Activated B cell treated with CpG ODN at 0.5 μM for 24 hours (primary cell): ENCODE measurements at regions of chr10 and their contacts with region 1.

Region 1: GRCh38 chr10:80205478-80206276 is at the start of gene ANXA11:
- DNase-seq: peak; percentile 80
- ATAC-seq: peak; percentile 84
- H3K4me3 Mint-ChIP-seq: peak within 1 kb of the TSS; percentile 83
- H3K27ac Mint-ChIP-seq: peak within 1 kb of the TSS; percentile 92
- H3K4me1 Mint-ChIP-seq: peaks cover 51% of the 10 kb centered on the region
- H3K27me3 Mint-ChIP-seq: no peaks in the 10 kb centered on the region
- CTCF ChIP-seq: no peak
- total RNA-seq, gene ANXA11: 178 and 190 TPM in 2 replicates

Region 2: DNA sequence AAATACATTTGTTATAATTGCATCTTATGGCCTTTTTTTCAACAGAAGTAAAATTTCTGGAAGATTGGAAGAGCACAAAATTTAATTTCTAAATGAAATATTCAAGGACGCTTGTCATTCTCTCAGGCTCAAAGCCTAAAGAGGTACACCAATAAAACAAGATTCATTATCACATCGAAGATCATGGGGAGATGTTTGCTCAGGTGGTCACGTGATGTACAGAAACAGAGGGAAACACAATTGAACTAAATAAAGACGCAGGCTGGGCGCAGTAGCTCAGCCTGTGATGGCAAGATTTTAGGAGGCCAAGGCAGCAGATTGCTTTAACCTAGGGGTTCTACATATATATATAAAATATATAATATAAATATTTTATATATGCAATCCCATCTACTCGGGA is 164.5 kb before region 1 on chr10:
- CTCF ChIA-PET with region 1: no interaction called
- POLR2A ChIA-PET with region 1: no interaction called
- intact Hi-C with region 1: no loop called
- DNase-seq: no peak
- ATAC-seq: no peak
- H3K4me3 Mint-ChIP-seq: no peak overlapping the region
- H3K27ac Mint-ChIP-seq: no peak overlapping the region
- H3K4me1 Mint-ChIP-seq: peaks cover 4% of the 10 kb centered on the region
- H3K27me3 Mint-ChIP-seq: peaks cover 1% of the 10 kb centered on the region
- CTCF ChIP-seq: no peak

Region 3: GRCh38 chr10:80168679-80169380 is 36.8 kb before region 1 on chr10:
- CTCF ChIA-PET with region 1: interaction called, 3 read pairs
- POLR2A ChIA-PET with region 1: interaction called, 3 read pairs
- intact Hi-C with region 1: loop called (anchors 2 kb)
- DNase-seq: no peak
- ATAC-seq: peak; percentile 34
- H3K4me3 Mint-ChIP-seq: no peak overlapping the region
- H3K27ac Mint-ChIP-seq: no peak overlapping the region
- H3K4me1 Mint-ChIP-seq: peaks cover 9% of the 10 kb centered on the region
- H3K27me3 Mint-ChIP-seq: no peaks in the 10 kb centered on the region
- CTCF ChIP-seq: no peak

Region 4: DNA sequence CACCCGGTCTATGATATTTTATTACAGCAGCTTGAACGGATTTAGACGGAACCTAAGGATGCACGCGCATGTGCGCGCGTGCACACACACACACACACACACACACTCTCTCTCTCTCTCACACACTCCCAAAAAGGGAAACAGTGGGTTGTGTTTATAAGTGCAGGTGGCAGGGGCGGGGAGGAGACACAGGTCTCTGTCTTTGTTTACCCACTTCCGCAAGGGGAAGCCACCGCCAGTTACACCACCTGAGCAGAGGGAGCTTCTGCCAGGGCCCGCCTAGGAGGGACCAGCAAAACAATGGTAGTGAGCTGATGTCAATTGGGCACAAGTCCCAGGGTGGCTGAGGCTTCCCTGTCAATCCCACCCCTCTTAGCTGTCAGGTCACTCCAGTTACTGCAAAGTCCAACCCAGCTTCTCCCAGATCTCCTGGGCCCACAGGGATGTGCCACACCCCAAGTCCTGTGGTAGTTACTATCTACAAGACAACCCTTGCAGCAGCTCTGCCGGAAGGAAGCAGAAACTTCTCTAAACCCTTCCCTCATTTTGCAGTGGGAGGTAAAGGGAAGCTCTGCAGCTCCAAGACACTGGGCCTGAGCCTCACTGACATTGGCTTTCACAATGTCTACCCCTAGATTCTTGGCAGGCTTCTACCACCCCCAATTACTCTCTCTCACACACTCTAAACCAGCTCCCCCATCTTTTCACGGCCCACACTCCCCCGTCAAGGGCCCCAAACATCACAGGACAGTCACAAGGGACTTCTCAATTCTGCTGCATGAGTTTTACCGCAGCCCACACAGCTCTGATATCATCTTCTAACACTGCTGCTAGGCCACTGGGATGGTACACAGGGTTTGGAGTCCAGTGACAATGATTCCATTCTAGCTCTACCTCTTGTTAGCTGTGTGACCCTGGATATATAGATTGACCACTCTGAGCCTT is 17.9 kb before region 1 on chr10:
- CTCF ChIA-PET with region 1: interaction called, 18 read pairs
- POLR2A ChIA-PET with region 1: interaction called, 40 read pairs
- intact Hi-C with region 1: loop called (anchors 1 kb)
- DNase-seq: peak; percentile 57
- ATAC-seq: peak; percentile 91
- H3K4me3 Mint-ChIP-seq: peak overlapping the region; percentile 68
- H3K27ac Mint-ChIP-seq: peak overlapping the region; percentile 91
- H3K4me1 Mint-ChIP-seq: peaks cover 82% of the 10 kb centered on the region
- H3K27me3 Mint-ChIP-seq: no peaks in the 10 kb centered on the region
- CTCF ChIP-seq: no peak

Region 5: DNA sequence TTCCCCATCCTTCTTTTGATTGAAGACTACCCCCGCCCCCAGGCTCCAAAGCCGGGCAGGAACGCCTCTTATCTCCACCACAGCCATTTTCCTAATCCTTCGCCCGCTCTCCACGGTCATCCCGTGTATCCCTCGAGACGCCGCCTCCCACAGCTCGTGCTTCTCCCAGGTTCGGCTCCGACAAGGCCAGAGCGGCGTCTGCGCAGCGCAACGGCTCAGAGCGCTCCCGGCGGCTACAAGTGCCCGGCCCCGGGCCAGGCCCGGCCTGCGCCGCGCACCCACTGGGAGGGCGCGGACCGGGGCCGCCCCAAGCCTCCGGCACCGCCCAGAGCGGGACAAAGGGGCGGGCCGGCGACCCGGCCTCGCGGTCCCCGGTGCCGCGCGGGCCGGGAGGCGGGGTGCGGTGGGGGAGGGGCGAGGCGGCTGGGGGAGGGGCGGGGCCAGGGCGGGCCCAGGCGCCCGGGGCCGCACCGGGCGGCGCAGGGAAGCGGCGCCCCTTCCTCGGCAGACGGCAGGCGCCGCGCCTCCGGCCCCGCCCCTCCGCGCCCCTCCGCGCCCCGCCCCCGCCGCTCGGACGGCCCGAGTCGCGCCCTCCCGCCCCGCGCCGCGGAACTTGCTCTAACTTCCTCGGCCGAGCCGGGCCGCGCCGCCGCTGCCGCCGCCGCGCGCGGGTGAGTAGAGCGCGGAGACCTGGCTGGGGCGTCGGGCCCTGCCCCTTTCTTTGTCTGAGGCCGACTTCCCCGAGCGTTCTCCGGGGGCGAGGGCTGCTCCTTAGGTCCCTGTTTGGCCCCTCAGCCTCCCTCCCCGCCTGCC is 248.2 kb after region 1 on chr10 and contains the start of gene TSPAN14:
- CTCF ChIA-PET with region 1: no interaction called
- POLR2A ChIA-PET with region 1: no interaction called
- intact Hi-C with region 1: loop called (anchors 2 kb)
- DNase-seq: peak; percentile 73
- ATAC-seq: peak; percentile 77
- H3K4me3 Mint-ChIP-seq: peak within 1 kb of the TSS; percentile 95
- H3K27ac Mint-ChIP-seq: peak within 1 kb of the TSS; percentile 89
- H3K4me1 Mint-ChIP-seq: peaks cover 50% of the 10 kb centered on the region
- H3K27me3 Mint-ChIP-seq: no peaks in the 10 kb centered on the region
- CTCF ChIP-seq: no peak
- total RNA-seq, gene TSPAN14: 18.9 and 20.7 TPM in 2 replicates